Activated T-helper 1 cell treated with anti-CD3 and anti-CD28 coated beads, Interleukin-12 subunit alpha, Interleukin-12 subunit beta, Interleukin-2, Interleukin-4 antibody, amounts not matched to agents 30 ng/mL and 10 ng/mL and 1 ng/mL, durations not matched to agents 14 hours and 24 hours and 36 hours (primary cell): ENCODE measurements at regions of chr1 and their contacts with region 1.

Region 1: GRCh38 chr1:204463125-204464060 is 31.2 kb downstream of the PIK3C2B start:
- DNase-seq: no peak
- H3K4me3 Mint-ChIP-seq: no peak overlapping the region
- H3K27ac Mint-ChIP-seq: no peak overlapping the region
- H3K4me1 Mint-ChIP-seq: peaks cover 62% of the 10 kb centered on the region
- H3K27me3 Mint-ChIP-seq: no peaks in the 10 kb centered on the region

Region 2: GRCh38 chr1:204438628-204439027 is 24.8 kb before region 1 on chr1:
- intact Hi-C with region 1: no loop called
- DNase-seq: no peak
- H3K4me3 Mint-ChIP-seq: no peak overlapping the region
- H3K27ac Mint-ChIP-seq: peak overlapping the region; percentile 21
- H3K4me1 Mint-ChIP-seq: peaks cover 7% of the 10 kb centered on the region
- H3K27me3 Mint-ChIP-seq: no peaks in the 10 kb centered on the region

Region 3: GRCh38 chr1:204453141-204453772 is 10.1 kb before region 1 on chr1:
- intact Hi-C with region 1: loop called (anchors 1 kb)
- DNase-seq: peak; percentile 62
- H3K4me3 Mint-ChIP-seq: peak overlapping the region; percentile 75
- H3K27ac Mint-ChIP-seq: peak overlapping the region; percentile 84
- H3K4me1 Mint-ChIP-seq: peaks cover 45% of the 10 kb centered on the region
- H3K27me3 Mint-ChIP-seq: no peaks in the 10 kb centered on the region